GM18951 (cell line): ENCODE measurements at regions of chr10 and their contacts with region 1.

Region 1: GRCh38 chr10:99619851-99620712 is at the start of gene SLC25A28:
- POLR2A ChIP-seq: no peak

Region 2: GRCh38 chr10:99395750-99396445 is 224.2 kb before region 1 on chr10:
- in situ Hi-C with region 1: loop called (anchors 10 kb)
- POLR2A ChIP-seq: no peak

Region 3: DNA sequence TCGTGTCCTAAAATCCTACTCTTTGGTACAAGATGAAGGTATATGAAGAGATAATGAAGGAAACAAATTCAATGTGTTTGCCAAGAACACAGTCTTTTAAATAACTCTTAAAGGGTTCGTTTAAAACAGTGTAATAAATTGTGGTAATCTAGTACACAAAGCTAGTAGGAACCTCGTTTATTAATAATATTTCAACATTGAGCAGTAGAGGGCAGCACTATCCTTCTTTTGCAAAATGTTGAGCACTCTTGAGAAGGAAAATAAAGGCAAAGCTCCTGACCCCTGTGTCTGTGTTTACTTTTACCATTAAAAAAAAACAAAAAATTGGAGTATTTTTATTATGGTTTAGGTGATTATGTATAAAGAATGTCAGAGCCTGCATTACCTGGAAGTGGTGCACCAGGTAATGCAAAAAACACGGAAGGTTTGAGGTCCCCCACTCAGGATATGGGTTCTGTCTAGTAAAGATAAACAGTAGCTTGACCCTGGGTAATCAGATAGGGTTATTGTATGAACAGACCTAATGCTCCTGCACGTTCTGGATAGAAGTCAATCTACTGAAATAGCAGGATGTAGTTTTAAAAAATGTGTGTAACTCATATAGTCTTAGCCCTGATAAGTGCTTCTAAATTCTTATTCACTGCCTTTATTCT is 184.0 kb before region 1 on chr10:
- in situ Hi-C with region 1: loop called (anchors 5 kb)
- POLR2A ChIP-seq: no peak